ENCODE measurements at regions of chr15 and their contacts with region 1.

Region 1: GRCh38 chr15:80386151-80386550 is 18.0 kb upstream of the ARNT2 start:
- DNase-seq: no peak
- H3K4me3 ChIP-seq: no peak overlapping the region
- CTCF ChIP-seq: no peak

Region 2: DNA sequence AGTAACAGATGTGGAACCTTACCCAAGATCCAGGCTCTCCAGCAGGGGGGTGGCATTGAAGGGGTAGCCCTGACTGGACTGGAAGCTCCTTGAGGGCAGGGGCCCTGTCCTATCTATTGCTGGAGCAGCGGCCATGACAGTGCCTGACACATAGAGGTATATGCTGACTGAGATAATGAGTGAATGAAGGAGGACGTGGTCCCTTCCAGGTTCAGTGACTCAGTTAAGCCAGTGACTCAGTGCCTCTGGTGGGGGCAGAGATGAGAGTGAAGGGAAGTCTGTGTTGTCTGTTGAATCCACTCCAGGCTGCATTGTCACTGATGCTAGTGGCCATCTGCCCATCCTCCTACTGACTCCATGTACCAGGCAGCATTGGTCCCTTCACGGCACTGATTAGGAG is 121.1 kb before region 1 on chr15:
- in situ Hi-C with region 1: loop called (anchors 5 kb)
- DNase-seq: no peak
- H3K4me3 ChIP-seq: no peak overlapping the region
- CTCF ChIP-seq: no peak